ENCODE measurements at regions of chr10 and their contacts with region 1.

Region 1: GRCh38 chr10:35246770-35247343 is 89.5 kb upstream of the CCNY start:
- DNase-seq: no peak
- ATAC-seq: no peak
- H3K4me3 ChIP-seq: no peak overlapping the region
- H3K27ac ChIP-seq: no peak overlapping the region
- H3K4me1 ChIP-seq: no peaks in the 10 kb centered on the region
- H3K27me3 ChIP-seq: no peaks in the 10 kb centered on the region

Region 2: DNA sequence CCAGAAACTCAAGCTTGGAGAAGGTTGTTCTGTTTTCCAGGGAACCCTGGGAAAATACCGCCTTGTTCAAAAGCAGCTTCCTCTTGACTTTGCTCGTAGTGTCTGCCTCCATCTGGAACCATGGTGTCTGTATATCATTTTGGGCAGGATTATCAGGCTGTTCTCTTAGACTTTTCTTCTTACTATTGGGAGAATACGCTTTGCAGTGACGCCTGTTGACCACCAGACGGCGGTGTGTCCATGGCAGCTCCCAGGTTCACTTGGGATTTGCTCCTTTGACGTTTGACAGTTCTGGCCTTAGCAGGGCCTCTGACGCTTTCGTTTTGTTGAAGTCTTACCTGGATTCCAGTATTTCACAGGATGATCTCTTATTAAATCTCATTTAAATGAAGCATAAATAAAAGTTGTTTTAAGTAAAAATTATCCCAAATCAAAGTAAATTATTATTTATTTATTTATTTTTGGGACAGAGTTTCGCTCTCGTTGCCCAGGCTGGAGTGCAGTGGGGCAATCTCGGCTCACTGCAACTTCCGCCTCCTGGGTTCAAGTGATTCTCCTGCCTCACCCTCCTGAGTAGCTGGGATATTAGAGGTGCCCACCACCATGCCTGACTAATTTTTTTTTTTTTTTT is 316.5 kb after region 1 on chr10:
- intact Hi-C with region 1: loop called in 1 of 4 experiments (anchors 10 kb)
- DNase-seq: peak in 2 of 3 donors; percentile 50 to 71
- ATAC-seq: peak; percentile 35 to 47
- H3K4me3 ChIP-seq: no peak overlapping the region
- H3K27ac ChIP-seq: peak overlapping the region; percentile 41
- H3K4me1 ChIP-seq: peaks cover 15% of the 10 kb centered on the region
- H3K27me3 ChIP-seq: no peaks in the 10 kb centered on the region

Region 3: DNA sequence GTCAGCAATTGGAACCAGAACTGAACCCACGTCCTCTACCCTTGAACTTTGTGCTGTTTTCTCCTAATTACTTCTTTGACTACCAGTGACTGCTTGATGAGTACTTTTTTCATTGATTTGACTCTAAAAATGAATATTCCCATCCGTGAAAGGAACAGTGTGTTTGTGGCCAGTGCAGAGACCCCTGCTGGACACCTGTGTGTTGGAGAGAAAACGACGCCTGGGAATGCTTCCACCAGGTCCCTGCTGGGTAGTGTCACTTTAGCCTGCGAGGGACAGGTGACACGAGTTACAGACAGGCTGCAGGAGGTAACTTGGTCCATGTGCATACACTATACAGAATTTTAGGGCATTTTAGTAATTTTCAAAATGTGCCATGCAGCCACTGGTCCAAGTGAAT is 351.5 kb after region 1 on chr10:
- intact Hi-C with region 1: loop called in 1 of 4 experiments (anchors 10 kb)
- DNase-seq: peak in 1 of 3 donors; percentile 61
- ATAC-seq: no peak
- H3K4me3 ChIP-seq: no peak overlapping the region
- H3K27ac ChIP-seq: no peak overlapping the region
- H3K4me1 ChIP-seq: no peaks in the 10 kb centered on the region
- H3K27me3 ChIP-seq: no peaks in the 10 kb centered on the region